ENCODE measurements at regions of chr12 and their contacts with region 1.

Region 1: GRCh38 chr12:459430-460258 is at the start of gene B4GALNT3:
- DNase-seq: peak; percentile 37 to 62
- ATAC-seq: peak; percentile 43 to 66 (median 59)
- H3K4me3 ChIP-seq: peak within 1 kb of the TSS; percentile 24
- H3K4me3 Mint-ChIP-seq: peak within 1 kb of the TSS; percentile 91
- H3K27ac ChIP-seq: no peak within 1 kb of the TSS
- H3K27ac Mint-ChIP-seq: peak within 1 kb of the TSS in 1 of 2 donors; percentile 70
- H3K4me1 ChIP-seq: peaks cover 22% of the 10 kb centered on the region
- H3K4me1 Mint-ChIP-seq: peaks cover 18 to 28% of the 10 kb centered on the region in 2 donors
- H3K27me3 ChIP-seq: peaks cover 10% of the 10 kb centered on the region
- H3K27me3 Mint-ChIP-seq: peaks cover 19 to 43% of the 10 kb centered on the region in 2 donors
- CTCF ChIP-seq: no peak
- total RNA-seq, gene B4GALNT3: 0.93 to 4.2 TPM in 2 of 3 donors, not detected in the other

Region 2: GRCh38 chr12:499837-500458 is 40.3 kb after region 1 on chr12:
- intact Hi-C with region 1: loop called (anchors 5 kb)
- DNase-seq: no peak
- ATAC-seq: no peak
- H3K4me3 ChIP-seq: no peak overlapping the region
- H3K4me3 Mint-ChIP-seq: no peak overlapping the region
- H3K27ac ChIP-seq: no peak overlapping the region
- H3K27ac Mint-ChIP-seq: no peak overlapping the region
- H3K4me1 ChIP-seq: peaks cover 7% of the 10 kb centered on the region
- H3K4me1 Mint-ChIP-seq: peaks cover 0 to 13% of the 10 kb centered on the region in 2 donors
- H3K27me3 ChIP-seq: no peaks in the 10 kb centered on the region
- H3K27me3 Mint-ChIP-seq: peaks cover 0 to 14% of the 10 kb centered on the region in 2 donors
- CTCF ChIP-seq: no peak